ENCODE measurements at regions of chr15 and their contacts with region 1.

Region 1: DNA sequence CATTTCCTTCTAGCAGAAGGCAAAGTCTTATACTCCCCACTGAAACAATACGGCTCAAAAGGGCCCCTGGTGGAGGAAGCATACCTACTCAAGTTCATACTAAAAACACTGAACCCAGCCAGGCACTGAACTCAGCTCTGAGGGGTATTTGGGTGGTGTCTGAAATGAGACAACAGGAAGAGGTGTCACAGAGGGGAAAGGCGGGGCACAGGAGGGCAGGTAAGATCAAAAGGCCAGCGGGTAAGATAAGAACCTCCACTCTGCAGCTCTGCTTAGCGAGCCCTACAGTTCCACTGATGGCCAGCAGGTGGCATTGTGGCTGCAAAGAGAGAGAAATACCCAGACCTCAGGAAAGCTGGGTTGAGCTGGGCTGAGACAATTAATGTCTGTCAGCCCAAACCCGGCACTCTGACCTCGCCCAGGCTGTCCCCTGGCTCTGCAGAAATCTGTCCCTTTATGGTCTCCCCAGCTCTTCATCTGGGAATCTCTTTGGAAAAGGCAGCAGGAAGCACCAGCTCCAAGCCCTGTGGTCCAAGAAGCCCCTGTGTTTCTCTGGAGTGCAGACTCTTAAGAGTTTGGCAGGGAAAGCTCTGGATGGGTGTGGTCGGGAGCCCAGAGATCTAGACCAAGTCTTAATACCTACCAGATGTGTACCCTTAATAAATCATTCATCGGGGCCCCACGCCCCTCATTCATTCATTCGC is 8.4 kb downstream of the MFGE8 start:
- DNase-seq: peak; percentile 83
- ATAC-seq: peak; percentile 69
- H3K4me3 ChIP-seq: peak overlapping the region in 1 of 2 experiments; percentile 9; a peak in 1 of 4 replicates
- H3K27ac ChIP-seq: peak overlapping the region; percentile 97
- H3K4me1 ChIP-seq: peaks cover 94% of the 10 kb centered on the region
- H3K27me3 ChIP-seq: no peaks in the 10 kb centered on the region
- CTCF ChIP-seq: peak; percentile 97

Region 2: GRCh38 chr15:88982304-88982945 is 77.6 kb after region 1 on chr15:
- CTCF ChIA-PET with region 1: interaction called, 10 read pairs
- POLR2A ChIA-PET with region 1: interaction called, 4 read pairs
- in situ Hi-C with region 1: no loop called
- intact Hi-C with region 1: no loop called
- DNase-seq: no peak
- ATAC-seq: peak; percentile 71
- H3K4me3 ChIP-seq: no peak overlapping the region
- H3K27ac ChIP-seq: peak overlapping the region; percentile 98
- H3K4me1 ChIP-seq: peaks cover 56% of the 10 kb centered on the region
- H3K27me3 ChIP-seq: no peaks in the 10 kb centered on the region
- CTCF ChIP-seq: no peak

Region 3: GRCh38 chr15:89003865-89004725 is 99.3 kb after region 1 on chr15:
- CTCF ChIA-PET with region 1: interaction called, 27 read pairs
- POLR2A ChIA-PET with region 1: no interaction called
- in situ Hi-C with region 1: no loop called
- intact Hi-C with region 1: loop called (anchors 2 kb)
- DNase-seq: no peak
- ATAC-seq: peak; percentile 93
- H3K4me3 ChIP-seq: no peak overlapping the region
- H3K27ac ChIP-seq: peak overlapping the region; percentile 71
- H3K4me1 ChIP-seq: peaks cover 36% of the 10 kb centered on the region
- H3K27me3 ChIP-seq: no peaks in the 10 kb centered on the region
- CTCF ChIP-seq: peak; percentile 85

Region 4: GRCh38 chr15:89017370-89018066 is 112.7 kb after region 1 on chr15:
- CTCF ChIA-PET with region 1: interaction called, 10 read pairs
- POLR2A ChIA-PET with region 1: no interaction called
- in situ Hi-C with region 1: no loop called
- intact Hi-C with region 1: loop called (anchors 1 kb)
- DNase-seq: peak; percentile 67
- ATAC-seq: peak; percentile 90
- H3K4me3 ChIP-seq: peak overlapping the region; percentile 24 to 53
- H3K27ac ChIP-seq: peak overlapping the region; percentile 92
- H3K4me1 ChIP-seq: peaks cover 32% of the 10 kb centered on the region
- H3K27me3 ChIP-seq: no peaks in the 10 kb centered on the region
- CTCF ChIP-seq: peak; percentile 95

Region 5: GRCh38 chr15:89177633-89178306 is 273.0 kb after region 1 on chr15:
- CTCF ChIA-PET with region 1: interaction called, 13 read pairs
- POLR2A ChIA-PET with region 1: no interaction called
- in situ Hi-C with region 1: no loop called
- intact Hi-C with region 1: no loop called
- DNase-seq: peak; percentile 36
- ATAC-seq: peak; percentile 80
- H3K4me3 ChIP-seq: no peak overlapping the region
- H3K27ac ChIP-seq: no peak overlapping the region; the same call in none of the 2 replicates
- H3K4me1 ChIP-seq: no peaks in the 10 kb centered on the region
- H3K27me3 ChIP-seq: no peaks in the 10 kb centered on the region
- CTCF ChIP-seq: peak; percentile 91

Measured in Panc1 (cell line).